Breast epithelium (tissue), 4 donors: ENCODE measurements at regions of chr4 and their contacts with region 1.

Region 1: GRCh38 chr4:77075869-77076799 is at the start of gene CCNI:
- DNase-seq: peak; percentile 94 to 95
- H3K4me3 ChIP-seq: peak within 1 kb of the TSS; percentile 96 to 97 (median 97)
- H3K27ac ChIP-seq: peak within 1 kb of the TSS; percentile 100
- H3K4me1 ChIP-seq: peaks cover 0 to 16% of the 10 kb centered on the region in 2 donors
- H3K27me3 ChIP-seq: no peaks in the 10 kb centered on the region
- CTCF ChIP-seq: no peak
- POLR2A ChIP-seq: peak; percentile 81
- total RNA-seq, gene CCNI: 267 to 346 (median 271) TPM

Region 2: DNA sequence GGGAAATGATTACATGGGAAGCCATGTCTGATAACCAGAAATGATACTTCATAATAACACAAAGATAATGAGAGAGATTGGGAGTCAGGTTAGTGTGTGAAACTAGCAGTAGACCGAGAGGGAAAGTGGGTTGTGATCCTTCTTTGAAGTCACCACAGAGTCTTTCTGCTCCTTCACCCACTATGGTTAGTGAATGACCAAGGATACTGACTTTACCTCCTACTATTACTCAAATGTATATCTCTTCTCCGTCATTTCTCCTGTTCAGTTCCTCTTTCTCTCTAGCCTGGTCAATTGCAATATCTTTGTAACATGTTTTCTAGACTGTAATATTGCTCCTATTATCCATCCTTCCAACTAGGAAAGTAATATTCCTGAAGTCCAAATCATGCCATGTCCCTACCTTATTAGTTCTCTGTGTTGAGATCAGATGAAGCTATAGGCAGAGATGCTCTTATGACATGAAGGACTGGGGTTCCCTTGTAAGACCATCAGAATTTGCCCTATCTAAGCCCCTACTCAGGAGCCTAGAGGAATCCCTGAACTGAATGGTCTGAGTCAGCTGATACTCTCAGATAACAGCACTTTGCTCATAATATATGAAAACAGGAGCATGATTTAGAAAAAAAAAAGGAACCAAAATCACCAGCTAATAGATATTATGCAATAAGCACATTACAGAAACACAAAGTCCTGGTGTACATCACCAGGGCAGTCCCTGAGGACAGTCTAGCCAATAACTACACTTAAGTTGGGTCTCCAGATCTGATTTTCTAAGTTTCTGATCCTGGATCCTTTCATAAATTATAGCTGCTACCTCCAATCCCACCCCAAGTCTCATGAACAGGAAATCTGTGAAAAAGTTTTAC is 559.9 kb before region 1 on chr4:
- intact Hi-C with region 1: loop called (anchors 2 kb)
- DNase-seq: no peak
- H3K4me3 ChIP-seq: no peak overlapping the region
- H3K27ac ChIP-seq: no peak overlapping the region
- H3K4me1 ChIP-seq: no peaks in the 10 kb centered on the region
- H3K27me3 ChIP-seq: no peaks in the 10 kb centered on the region
- CTCF ChIP-seq: no peak
- POLR2A ChIP-seq: no peak

Region 3: DNA sequence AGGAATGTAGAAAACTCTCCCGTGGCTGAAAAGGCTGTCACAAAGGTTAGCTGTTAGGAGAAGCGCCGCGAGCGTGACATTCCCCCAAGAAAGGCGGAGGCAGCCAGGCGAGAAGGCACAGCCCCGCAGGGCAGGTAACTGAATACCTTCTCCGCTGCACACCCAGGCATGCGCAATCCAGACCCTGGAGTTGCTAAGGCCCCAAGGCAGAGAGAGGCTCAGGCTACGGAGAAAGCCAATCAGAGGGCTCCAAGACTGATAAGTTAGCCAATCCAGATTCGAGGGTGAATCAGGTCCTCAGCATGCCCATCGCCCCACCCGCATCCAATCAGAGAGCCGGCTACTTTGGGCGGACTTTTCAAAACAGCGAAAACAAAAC is 80.4 kb after region 1 on chr4:
- intact Hi-C with region 1: loop called (anchors 2 kb)
- DNase-seq: peak; percentile 95 to 99
- H3K4me3 ChIP-seq: peak overlapping the region; percentile 88 to 99 (median 98)
- H3K27ac ChIP-seq: peak overlapping the region; percentile 97
- H3K4me1 ChIP-seq: peaks cover 0 to 10% of the 10 kb centered on the region in 2 donors
- H3K27me3 ChIP-seq: no peaks in the 10 kb centered on the region
- CTCF ChIP-seq: no peak
- POLR2A ChIP-seq: peak; percentile 8